Lower leg skin (tissue), 4 donors: ENCODE measurements at regions of chr7 and their contacts with region 1.

Region 1: GRCh38 chr7:78662948-78663347 is 790.5 kb downstream of the MAGI2 start:
- DNase-seq: no peak
- H3K4me3 ChIP-seq: no peak overlapping the region
- CTCF ChIP-seq: no peak
- POLR2A ChIP-seq: no peak

Region 2: GRCh38 chr7:77971726-77972125 is 691.2 kb before region 1 on chr7:
- intact Hi-C with region 1: no loop called
- DNase-seq: no peak
- H3K4me3 ChIP-seq: no peak overlapping the region
- CTCF ChIP-seq: no peak
- POLR2A ChIP-seq: no peak

Region 3: GRCh38 chr7:78164459-78164858 is 498.5 kb before region 1 on chr7:
- intact Hi-C with region 1: no loop called
- DNase-seq: no peak
- H3K4me3 ChIP-seq: no peak overlapping the region
- CTCF ChIP-seq: no peak
- POLR2A ChIP-seq: no peak

Region 4: GRCh38 chr7:78686189-78686588 is 23.2 kb after region 1 on chr7:
- intact Hi-C with region 1: loop called (anchors 1 kb)
- DNase-seq: no peak
- H3K4me3 ChIP-seq: no peak overlapping the region
- CTCF ChIP-seq: no peak
- POLR2A ChIP-seq: no peak

Region 5: GRCh38 chr7:79761876-79762429 is 1099.0 kb after region 1 on chr7:
- intact Hi-C with region 1: loop called (anchors 5 kb)
- DNase-seq: no peak
- H3K4me3 ChIP-seq: no peak overlapping the region
- CTCF ChIP-seq: no peak
- POLR2A ChIP-seq: no peak